ENCODE measurements at regions of chr15 and their contacts with region 1.

Region 1: DNA sequence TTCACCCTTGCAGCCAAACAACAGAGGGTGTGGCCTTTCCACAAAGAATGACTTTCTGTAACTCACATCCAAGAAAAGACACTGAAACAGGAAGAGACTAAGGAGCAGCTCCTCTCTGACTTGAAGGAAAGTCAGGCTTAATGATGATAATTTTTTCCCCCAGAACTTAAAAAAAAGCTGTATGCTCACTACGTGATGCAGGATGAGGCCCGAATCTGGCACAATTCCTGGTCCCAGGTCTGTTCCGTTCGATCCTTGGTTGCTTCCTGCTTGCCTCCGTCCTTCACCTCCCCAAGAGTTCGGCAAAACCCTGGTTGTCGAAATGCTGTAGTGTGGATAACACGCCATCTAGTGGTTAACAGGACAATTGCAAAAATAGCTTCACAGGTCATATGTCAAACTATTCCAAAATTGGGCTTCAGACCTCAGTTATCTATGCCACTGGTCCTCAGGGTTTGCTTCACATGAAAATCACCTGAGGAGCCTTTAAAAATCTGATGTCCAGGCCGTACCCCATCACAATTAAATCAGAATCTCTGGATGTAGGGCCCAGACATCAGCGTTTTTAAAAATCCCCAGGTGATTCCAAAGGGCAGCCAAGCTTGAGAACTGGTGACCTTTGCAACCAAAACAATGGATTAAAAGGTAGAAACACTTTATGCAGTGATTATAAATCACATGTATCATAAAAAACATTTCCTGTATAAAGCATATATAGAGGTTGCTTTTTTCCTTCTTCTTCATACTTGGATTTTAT is 28.1 kb upstream of the SYNM start:
- ATAC-seq: peak; percentile 44 to 88 (median 64)
- H3K4me3 ChIP-seq: peak overlapping the region in 1 of 5 donors; percentile 18
- H3K27ac ChIP-seq: no peak overlapping the region
- H3K4me1 ChIP-seq: peaks cover 0 to 8% of the 10 kb centered on the region in 2 donors

Region 2: GRCh38 chr15:98428253-98428989 is 648.3 kb before region 1 on chr15:
- in situ Hi-C with region 1: loop called in 4 of 9 experiments (anchors 25 kb)
- ATAC-seq: peak; percentile 93 to 97 (median 95)
- H3K4me3 ChIP-seq: peak overlapping the region; percentile 11 to 30 (median 28)
- H3K27ac ChIP-seq: no peak overlapping the region
- H3K4me1 ChIP-seq: no peaks in the 10 kb centered on the region

Region 3: DNA sequence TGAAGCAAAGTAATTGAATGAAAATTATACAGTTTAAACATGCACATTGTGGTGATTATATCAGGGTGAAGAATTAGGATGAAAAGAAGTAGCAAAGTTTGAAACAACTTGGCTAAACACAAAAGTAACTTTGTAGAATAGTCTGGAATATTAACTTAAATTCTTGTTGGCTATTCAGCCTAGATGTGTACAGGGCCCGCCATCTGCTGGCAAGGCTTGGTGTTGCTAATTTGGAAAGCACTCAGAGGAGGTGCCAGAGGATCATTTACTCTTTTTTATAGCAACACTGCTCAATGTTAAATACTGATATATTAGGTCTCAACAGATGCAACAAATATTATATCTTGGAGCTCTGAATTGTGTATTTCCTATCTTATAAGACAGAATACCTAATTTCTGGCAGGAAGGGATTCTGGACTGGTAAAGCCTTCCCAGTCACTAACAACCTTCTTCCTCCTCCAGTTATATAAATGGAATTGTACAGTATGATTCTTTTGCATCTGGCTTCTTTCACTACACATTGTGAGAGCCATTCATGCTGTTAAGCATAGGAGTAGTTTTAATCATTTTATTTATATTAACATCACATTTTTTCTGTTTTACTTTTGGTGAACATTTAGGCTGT is 136.6 kb after region 1 on chr15:
- in situ Hi-C with region 1: loop called in 1 of 9 experiments (anchors 25 kb)
- ATAC-seq: peak in 7 of 8 experiments; percentile 42 to 87 (median 65)
- H3K4me3 ChIP-seq: no peak overlapping the region
- H3K27ac ChIP-seq: no peak overlapping the region
- H3K4me1 ChIP-seq: no peaks in the 10 kb centered on the region

Region 4: DNA sequence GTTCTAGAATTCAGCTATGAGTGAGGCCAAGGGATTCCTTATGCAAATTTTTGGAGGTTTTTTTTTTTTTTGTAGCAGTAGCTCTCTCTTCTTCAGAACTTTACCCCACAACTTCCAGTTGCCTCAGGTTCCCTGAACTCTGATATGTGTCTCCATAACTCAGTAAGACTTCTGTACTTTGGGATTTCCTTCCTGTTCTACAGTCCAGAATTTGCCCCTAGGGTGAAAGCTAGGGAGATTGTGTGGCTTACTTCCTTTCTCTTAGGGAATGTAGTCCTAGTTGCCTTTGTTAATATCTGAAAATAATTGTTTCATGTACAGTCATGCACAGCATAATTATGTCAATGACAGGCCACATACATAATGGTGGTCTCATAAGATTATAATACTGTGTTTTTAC is 205.4 kb after region 1 on chr15:
- in situ Hi-C with region 1: no loop called
- ATAC-seq: no peak
- H3K4me3 ChIP-seq: no peak overlapping the region
- H3K27ac ChIP-seq: no peak overlapping the region
- H3K4me1 ChIP-seq: no peaks in the 10 kb centered on the region

Region 5: GRCh38 chr15:99303907-99304306 is 227.2 kb after region 1 on chr15:
- in situ Hi-C with region 1: no loop called
- ATAC-seq: no peak
- H3K4me3 ChIP-seq: no peak overlapping the region
- H3K27ac ChIP-seq: no peak overlapping the region
- H3K4me1 ChIP-seq: peaks cover 0 to 7% of the 10 kb centered on the region in 2 donors

Measured in motor neuron (in vitro differentiated cells).